ENCODE measurements at regions of chr20 and their contacts with region 1.

Region 1: GRCh38 chr20:38165089-38165989 is at the start of gene TGM2:
- DNase-seq: peak; percentile 90 to 95 (median 94)
- ATAC-seq: peak; percentile 84 to 85
- H3K4me3 ChIP-seq: peak within 1 kb of the TSS; percentile 79
- H3K27ac ChIP-seq: peak within 1 kb of the TSS; percentile 88
- H3K4me1 ChIP-seq: peaks cover 26% of the 10 kb centered on the region
- H3K27me3 ChIP-seq: no peaks in the 10 kb centered on the region
- total RNA-seq, gene TGM2: 963 to 1,731 (median 1,257) TPM

Region 2: DNA sequence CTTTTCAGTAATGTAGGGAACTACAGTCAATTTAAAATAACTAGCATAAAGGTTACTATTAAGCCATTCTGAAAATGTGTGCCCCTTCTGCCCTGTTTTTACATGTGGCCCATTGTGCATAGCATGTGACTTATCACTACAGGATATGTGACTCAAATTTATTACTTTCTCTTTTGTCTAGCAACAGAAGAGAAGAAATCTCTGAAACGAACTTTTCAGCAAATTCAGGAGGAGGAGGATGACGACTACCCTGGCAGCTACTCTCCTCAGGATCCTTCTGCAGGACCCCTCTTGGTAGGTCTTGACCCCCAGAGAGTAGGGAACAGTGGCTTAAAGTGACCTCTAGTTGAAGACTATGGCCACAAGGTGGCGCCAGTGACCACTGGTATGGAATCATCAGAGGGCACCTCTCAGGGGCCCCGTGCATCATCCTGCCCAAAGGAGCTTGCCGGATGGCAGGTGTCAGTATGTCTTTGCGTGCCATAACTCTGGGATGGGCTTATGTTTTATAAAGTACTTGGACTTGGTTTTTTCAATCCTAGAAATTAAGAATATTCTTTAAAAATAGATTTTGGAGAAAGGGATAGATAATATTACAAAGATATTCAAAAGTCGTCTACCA is 107.9 kb before region 1 on chr20:
- intact Hi-C with region 1: loop called in 3 of 4 experiments (anchors 5 kb)
- DNase-seq: peak; percentile 89 to 96 (median 92)
- ATAC-seq: peak; percentile 87 to 90
- H3K4me3 ChIP-seq: no peak overlapping the region
- H3K27ac ChIP-seq: no peak overlapping the region
- H3K4me1 ChIP-seq: no peaks in the 10 kb centered on the region
- H3K27me3 ChIP-seq: no peaks in the 10 kb centered on the region

Region 3: GRCh38 chr20:38073307-38074071 is 91.8 kb before region 1 on chr20:
- intact Hi-C with region 1: loop called in 3 of 4 experiments (anchors 5 kb)
- DNase-seq: peak; percentile 74 to 80 (median 74)
- ATAC-seq: peak; percentile 86 to 87
- H3K4me3 ChIP-seq: no peak overlapping the region
- H3K27ac ChIP-seq: peak overlapping the region; percentile 80
- H3K4me1 ChIP-seq: peaks cover 6% of the 10 kb centered on the region
- H3K27me3 ChIP-seq: no peaks in the 10 kb centered on the region

Region 4: GRCh38 chr20:38210741-38211140 is 45.4 kb after region 1 on chr20:
- intact Hi-C with region 1: loop called in 2 of 4 experiments (anchors 5 kb)
- DNase-seq: no peak
- ATAC-seq: no peak
- H3K4me3 ChIP-seq: no peak overlapping the region
- H3K27ac ChIP-seq: peak overlapping the region; percentile 78
- H3K4me1 ChIP-seq: peaks cover 13% of the 10 kb centered on the region
- H3K27me3 ChIP-seq: no peaks in the 10 kb centered on the region